Left colon (tissue), 2 donors: ENCODE measurements at regions of chr19 and their contacts with region 1.

Region 1: GRCh38 chr19:38319421-38320258 is at the start of gene KCNK6:
- DNase-seq: peak; percentile 86 to 87
- ATAC-seq: peak; percentile 59
- total RNA-seq, gene KCNK6: 27.2 to 32.7 TPM

Region 2: GRCh38 chr19:38250821-38251563 is 68.6 kb before region 1 on chr19:
- intact Hi-C with region 1: loop called in 1 of 2 experiments (anchors 10 kb)
- DNase-seq: peak; percentile 75 to 80
- ATAC-seq: peak; percentile 85

Region 3: GRCh38 chr19:38361633-38362075 is 42.0 kb after region 1 on chr19:
- intact Hi-C with region 1: no loop called
- DNase-seq: peak; percentile 78 to 83
- ATAC-seq: peak; percentile 83